Ascending aorta (tissue), 2 donors: ENCODE measurements at regions of chr20 and their contacts with region 1.

Region 1: GRCh38 chr20:43749734-43750294 is 23.0 kb upstream of the GTSF1L start:
- DNase-seq: peak in 1 of 2 donors; percentile 86
- H3K4me3 ChIP-seq: no peak overlapping the region
- H3K27ac ChIP-seq: no peak overlapping the region
- H3K4me1 ChIP-seq: no peaks in the 10 kb centered on the region
- H3K27me3 ChIP-seq: no peaks in the 10 kb centered on the region
- CTCF ChIP-seq: peak; percentile 91 to 100 (median 100)

Region 2: DNA sequence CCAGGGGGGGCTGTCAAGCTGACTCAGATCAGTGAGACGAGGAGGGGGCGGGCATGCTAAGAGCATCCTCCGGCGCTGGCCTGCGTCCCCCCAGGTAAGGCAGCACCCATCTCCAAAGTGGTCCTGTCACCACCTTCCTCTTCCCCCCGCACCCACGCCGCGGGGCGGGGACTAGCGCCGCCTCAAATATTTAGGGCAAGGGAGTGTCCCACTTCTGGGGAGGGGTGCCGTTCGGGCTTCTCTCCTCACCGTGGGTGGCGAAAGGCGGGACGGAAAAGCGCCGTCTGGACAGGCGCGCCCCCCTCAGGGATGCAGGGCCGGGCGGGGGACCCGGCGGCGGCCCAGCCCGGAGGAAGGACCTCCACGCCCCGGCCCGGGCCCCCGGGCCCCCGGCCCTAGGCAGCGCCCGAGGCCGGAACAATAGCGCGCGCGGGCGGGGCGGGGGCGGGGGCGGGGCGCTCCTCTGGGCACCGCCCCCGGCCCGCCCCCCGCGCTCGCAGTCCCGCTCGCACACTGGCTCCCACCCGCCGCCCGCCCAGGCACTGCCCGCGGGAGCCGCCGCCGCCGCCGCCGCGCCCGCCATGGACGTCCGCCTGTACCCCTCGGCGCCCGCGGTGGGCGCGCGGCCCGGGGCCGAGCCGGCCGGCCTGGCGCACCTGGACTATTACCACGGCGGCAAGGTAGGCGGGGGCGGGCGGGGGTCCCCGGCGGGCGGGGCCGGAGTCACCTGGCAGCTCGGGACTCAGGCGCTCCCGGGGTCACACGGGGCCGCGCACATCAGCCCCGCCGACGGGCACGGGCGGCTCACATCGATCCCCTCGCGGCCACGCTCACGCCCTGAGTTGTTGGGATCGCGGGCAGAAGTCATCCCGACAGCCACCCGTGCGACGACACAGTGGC is 164.7 kb after region 1 on chr20 and contains the start of gene TOX2:
- intact Hi-C with region 1: loop called (anchors 5 kb)
- DNase-seq: peak in 1 of 2 donors; percentile 74
- H3K4me3 ChIP-seq: peak within 1 kb of the TSS; percentile 55 to 71
- H3K27ac ChIP-seq: peak within 1 kb of the TSS in 1 of 2 donors; percentile 58
- H3K4me1 ChIP-seq: no peaks in the 10 kb centered on the region
- H3K27me3 ChIP-seq: no peaks in the 10 kb centered on the region
- CTCF ChIP-seq: no peak
- total RNA-seq, gene TOX2: 47.0 TPM

Region 3: DNA sequence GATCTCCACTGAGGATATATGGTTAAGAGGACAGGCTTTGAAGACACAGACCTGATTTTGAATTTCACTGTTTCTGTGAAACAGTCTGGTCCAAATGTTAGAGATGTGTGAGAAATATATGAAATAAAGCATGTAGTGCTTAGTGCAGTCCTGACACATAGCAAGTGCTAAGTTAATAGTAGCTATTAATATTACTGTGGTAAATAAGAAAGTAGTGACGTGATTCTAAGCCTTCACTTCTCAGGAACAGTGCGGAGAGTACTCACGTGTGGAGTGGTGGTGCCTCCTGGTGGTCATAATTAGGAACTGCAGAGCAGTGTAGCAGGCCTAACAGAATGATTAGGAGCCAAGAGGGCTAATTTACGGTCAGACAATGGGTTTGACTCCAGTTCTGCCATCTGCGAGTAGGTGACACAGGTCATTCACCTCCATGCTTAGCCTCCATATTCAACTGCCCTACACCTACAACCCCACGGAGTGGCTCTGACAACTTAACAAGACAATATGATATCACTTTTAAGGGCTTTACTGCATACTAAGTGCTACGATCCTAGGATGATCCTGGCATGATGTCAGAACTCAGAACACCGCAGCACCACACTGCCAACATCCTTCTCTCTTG is 330.9 kb after region 1 on chr20:
- intact Hi-C with region 1: loop called (anchors 1 kb)
- DNase-seq: peak in 1 of 2 donors; percentile 78
- H3K4me3 ChIP-seq: no peak overlapping the region
- H3K27ac ChIP-seq: no peak overlapping the region
- H3K4me1 ChIP-seq: peaks cover 0 to 2% of the 10 kb centered on the region in 2 donors
- H3K27me3 ChIP-seq: no peaks in the 10 kb centered on the region
- CTCF ChIP-seq: peak; percentile 95 to 99 (median 97)

Region 4: DNA sequence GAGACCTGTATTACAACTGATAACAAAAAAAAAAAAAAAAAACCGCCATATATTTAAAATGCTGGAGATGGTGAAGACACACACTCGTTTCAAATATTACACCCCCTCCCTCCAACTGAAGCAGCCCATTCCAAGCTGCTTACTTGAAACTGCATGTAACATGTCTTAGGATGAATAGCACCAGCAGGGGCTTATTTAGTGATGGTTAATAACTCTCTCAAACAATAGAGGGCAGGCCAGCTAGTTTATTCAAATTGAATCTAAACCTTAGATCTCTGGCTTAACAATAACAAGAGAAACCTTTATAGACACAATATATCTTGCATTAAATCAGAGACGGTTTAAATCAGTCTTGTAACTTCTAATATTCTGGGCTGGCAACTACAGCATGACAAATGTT is 446.5 kb after region 1 on chr20:
- intact Hi-C with region 1: loop called (anchors 5 kb)
- DNase-seq: no peak
- H3K4me3 ChIP-seq: no peak overlapping the region
- H3K27ac ChIP-seq: no peak overlapping the region
- H3K4me1 ChIP-seq: peaks cover 0 to 4% of the 10 kb centered on the region in 2 donors
- H3K27me3 ChIP-seq: no peaks in the 10 kb centered on the region
- CTCF ChIP-seq: no peak